IMR-90 (cell line): ENCODE measurements at regions of chr10 and their contacts with region 1.

Region 1: GRCh38 chr10:70233109-70233938 is at the start of gene PPA1:
- DNase-seq: peak; percentile 91
- ATAC-seq: peak; percentile 99
- H3K4me3 ChIP-seq: peak within 1 kb of the TSS; percentile 76
- H3K27ac ChIP-seq: peak within 1 kb of the TSS; percentile 47
- H3K4me1 ChIP-seq: peaks cover 2% of the 10 kb centered on the region; the same call in 1 of the 2 replicates
- H3K27me3 ChIP-seq: no peaks in the 10 kb centered on the region
- CTCF ChIP-seq: 0 out of 2 replicates have a peak, but pooled peaks have one; percentile 14
- POLR2A ChIP-seq: peak; percentile 72
- RAD21 ChIP-seq: no peak
- total RNA-seq, gene PPA1: 102 and 211 TPM in 2 replicates

Region 2: DNA sequence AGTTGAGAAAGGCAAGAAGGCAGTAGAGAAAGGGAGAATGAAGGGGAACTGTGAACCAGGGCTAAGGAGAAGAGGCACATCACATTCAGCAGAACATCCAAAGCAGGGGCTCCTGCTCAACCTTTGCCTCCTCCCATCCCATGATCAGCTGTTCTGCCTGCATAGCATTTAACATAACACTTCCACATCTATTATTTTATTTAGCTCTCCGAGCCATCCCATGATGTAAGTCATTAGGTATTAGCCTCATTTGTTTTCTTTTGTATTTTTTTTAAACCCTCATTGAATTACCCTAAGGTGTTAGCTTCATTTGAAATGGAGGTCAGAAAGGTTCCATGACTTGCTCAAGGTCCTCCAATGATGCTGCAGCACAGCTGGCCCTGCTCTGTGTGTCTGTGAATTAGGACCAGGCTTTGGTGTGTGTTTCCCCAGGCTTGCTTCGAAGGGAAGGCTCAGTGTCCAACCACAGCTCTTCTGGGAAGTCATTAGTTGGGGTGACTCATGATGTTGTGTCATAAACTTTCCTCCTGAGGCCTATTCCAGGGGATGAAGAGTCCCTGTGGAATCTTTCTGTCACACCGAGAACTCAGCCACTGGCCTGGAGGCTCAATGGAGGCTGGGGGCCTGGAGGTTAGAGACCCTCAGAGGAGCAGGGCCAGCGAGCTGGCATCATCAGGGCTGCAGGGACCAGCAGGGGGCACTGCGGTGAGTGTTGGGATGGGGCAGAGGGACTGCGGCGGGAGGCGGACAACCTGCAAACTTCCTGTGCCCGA is 34.0 kb after region 1 on chr10:
- CTCF ChIA-PET with region 1: no interaction called
- POLR2A ChIA-PET with region 1: no interaction called
- dilution Hi-C with region 1: no loop called
- in situ Hi-C with region 1: no loop called
- intact Hi-C with region 1: loop called (anchors 1 kb)
- DNase-seq: peak; percentile 98
- ATAC-seq: peak; percentile 97
- H3K4me3 ChIP-seq: no peak overlapping the region
- H3K27ac ChIP-seq: peak overlapping the region; percentile 63; the same call in 1 of the 2 replicates
- H3K4me1 ChIP-seq: peaks cover 11% of the 10 kb centered on the region
- H3K27me3 ChIP-seq: no peaks in the 10 kb centered on the region
- CTCF ChIP-seq: 0 out of 2 replicates have a peak, but pooled peaks have one; percentile 14
- POLR2A ChIP-seq: no peak
- RAD21 ChIP-seq: no peak

Region 3: GRCh38 chr10:70440296-70441160 is 207.2 kb after region 1 on chr10:
- CTCF ChIA-PET with region 1: no interaction called
- POLR2A ChIA-PET with region 1: no interaction called
- dilution Hi-C with region 1: no loop called
- in situ Hi-C with region 1: no loop called
- intact Hi-C with region 1: no loop called
- DNase-seq: no peak
- ATAC-seq: peak; percentile 19; the same call in 1 of the 2 replicates
- H3K4me3 ChIP-seq: no peak overlapping the region
- H3K27ac ChIP-seq: no peak overlapping the region
- H3K4me1 ChIP-seq: no peaks in the 10 kb centered on the region
- H3K27me3 ChIP-seq: peaks cover 51% of the 10 kb centered on the region
- CTCF ChIP-seq: no peak
- POLR2A ChIP-seq: no peak
- RAD21 ChIP-seq: no peak

Region 4: GRCh38 chr10:70774810-70775678 is 541.7 kb after region 1 on chr10:
- CTCF ChIA-PET with region 1: no interaction called
- POLR2A ChIA-PET with region 1: no interaction called
- dilution Hi-C with region 1: no loop called
- in situ Hi-C with region 1: no loop called
- intact Hi-C with region 1: no loop called
- DNase-seq: no peak
- ATAC-seq: no peak
- H3K4me3 ChIP-seq: no peak overlapping the region
- H3K27ac ChIP-seq: no peak overlapping the region
- H3K4me1 ChIP-seq: no peaks in the 10 kb centered on the region
- H3K27me3 ChIP-seq: peaks cover 37% of the 10 kb centered on the region
- CTCF ChIP-seq: no peak
- POLR2A ChIP-seq: no peak
- RAD21 ChIP-seq: no peak